AG04449 (cell line): ENCODE measurements at regions of chr9 and their contacts with region 1.

Region 1: GRCh38 chr9:129177791-129178559 is at the start of gene IER5L:
- DNase-seq: no peak
- H3K4me3 ChIP-seq: peak within 1 kb of the TSS; percentile 94
- CTCF ChIP-seq: no peak

Region 2: GRCh38 chr9:128972956-128973355 is 205.0 kb before region 1 on chr9:
- CTCF ChIA-PET with region 1: no interaction called
- POLR2A ChIA-PET with region 1: no interaction called
- DNase-seq: no peak
- H3K4me3 ChIP-seq: no peak overlapping the region
- CTCF ChIP-seq: no peak

Region 3: GRCh38 chr9:129071526-129072131 is 106.3 kb before region 1 on chr9:
- CTCF ChIA-PET with region 1: no interaction called
- POLR2A ChIA-PET with region 1: no interaction called
- DNase-seq: no peak
- H3K4me3 ChIP-seq: no peak overlapping the region
- CTCF ChIP-seq: no peak

Region 4: GRCh38 chr9:129131300-129132145 is 46.5 kb before region 1 on chr9:
- CTCF ChIA-PET with region 1: interaction called, 345 read pairs
- POLR2A ChIA-PET with region 1: interaction called, 233 read pairs
- DNase-seq: no peak
- H3K4me3 ChIP-seq: no peak overlapping the region
- CTCF ChIP-seq: peak; percentile 99

Region 5: GRCh38 chr9:129198319-129199011 is 20.5 kb after region 1 on chr9:
- CTCF ChIA-PET with region 1: interaction called, 4 read pairs
- POLR2A ChIA-PET with region 1: interaction called, 17 read pairs
- DNase-seq: peak; percentile 50
- H3K4me3 ChIP-seq: peak overlapping the region; percentile 24
- CTCF ChIP-seq: peak; percentile 27

Region 6: GRCh38 chr9:129333953-129334724 is 156.2 kb after region 1 on chr9:
- CTCF ChIA-PET with region 1: interaction called, 16 read pairs
- POLR2A ChIA-PET with region 1: interaction called, 39 read pairs
- DNase-seq: peak; percentile 86
- H3K4me3 ChIP-seq: peak overlapping the region; percentile 15
- CTCF ChIP-seq: no peak

Region 7: DNA sequence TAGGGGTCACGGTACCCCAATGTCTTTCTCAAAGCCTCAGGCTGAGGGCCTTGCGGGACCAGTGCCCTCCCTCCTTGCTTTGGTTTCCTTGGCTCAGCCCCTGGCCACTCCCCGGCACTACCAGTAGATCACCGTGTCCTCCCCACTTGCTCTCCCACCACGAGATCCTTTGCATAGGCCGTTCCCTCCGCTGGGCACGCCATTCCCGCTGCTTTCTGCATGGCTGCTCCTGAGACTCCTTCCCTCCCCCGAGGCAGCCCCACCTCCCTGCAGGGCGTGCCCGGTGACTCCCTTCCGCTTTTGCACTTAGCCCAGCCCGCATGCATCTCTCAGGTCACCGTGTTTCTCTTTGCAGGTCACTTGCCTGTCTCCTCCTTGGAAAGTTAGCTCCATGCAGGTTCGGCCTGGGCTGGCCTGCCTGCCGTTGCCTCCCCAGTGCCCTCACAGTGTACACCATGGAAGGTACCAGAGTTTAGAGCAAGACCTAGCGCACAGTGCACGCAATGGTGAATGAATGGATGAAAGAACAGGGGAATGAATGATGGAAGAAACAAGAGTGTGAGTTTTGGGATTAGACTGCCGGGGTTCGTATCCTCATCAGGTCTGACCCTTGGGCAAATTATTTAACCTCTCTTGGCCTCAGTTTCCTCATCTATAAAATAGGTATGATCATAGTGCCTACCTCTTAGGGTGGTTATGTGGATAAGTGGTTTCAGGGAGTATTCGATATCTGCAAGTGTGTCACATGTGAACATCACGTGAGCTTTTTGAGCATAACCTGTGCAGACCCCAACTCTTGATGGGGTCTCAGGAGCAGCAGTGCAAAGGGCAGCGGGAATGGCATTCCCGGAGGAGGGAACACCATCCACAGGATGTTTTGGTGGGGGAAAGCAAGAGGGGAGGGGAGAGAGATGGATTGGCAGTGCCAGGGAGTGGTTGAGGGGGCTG is 228.6 kb after region 1 on chr9:
- CTCF ChIA-PET with region 1: no interaction called
- POLR2A ChIA-PET with region 1: no interaction called
- DNase-seq: no peak
- H3K4me3 ChIP-seq: no peak overlapping the region
- CTCF ChIP-seq: no peak

Region 8: GRCh38 chr9:129482521-129483414 is 304.8 kb after region 1 on chr9:
- CTCF ChIA-PET with region 1: interaction called, 20 read pairs
- POLR2A ChIA-PET with region 1: interaction called, 101 read pairs
- DNase-seq: no peak
- H3K4me3 ChIP-seq: peak overlapping the region; percentile 37
- CTCF ChIP-seq: peak; percentile 28

Region 9: GRCh38 chr9:129495534-129496325 is 317.8 kb after region 1 on chr9:
- CTCF ChIA-PET with region 1: interaction called, 28 read pairs
- POLR2A ChIA-PET with region 1: interaction called, 170 read pairs
- DNase-seq: no peak
- H3K4me3 ChIP-seq: peak overlapping the region; percentile 78
- CTCF ChIP-seq: no peak

Region 10: GRCh38 chr9:129610473-129611301 is 432.7 kb after region 1 on chr9:
- CTCF ChIA-PET with region 1: interaction called, 16 read pairs
- POLR2A ChIA-PET with region 1: interaction called, 17 read pairs
- DNase-seq: no peak
- H3K4me3 ChIP-seq: peak overlapping the region; percentile 66
- CTCF ChIP-seq: peak; percentile 86